Activated CD4-positive, alpha-beta T cell treated with anti-CD3 and anti-CD28 coated beads for 36 hours (primary cell): ENCODE measurements at regions of chr3 and their contacts with region 1.

Region 1: GRCh38 chr3:138915503-138916498 is 31.1 kb downstream of the FOXL2 start:
- DNase-seq: peak; percentile 93
- ATAC-seq: peak; percentile 89
- H3K4me3 Mint-ChIP-seq: peak overlapping the region; percentile 76
- H3K27ac Mint-ChIP-seq: peak overlapping the region; percentile 73
- H3K4me1 Mint-ChIP-seq: peaks cover 5% of the 10 kb centered on the region
- H3K27me3 Mint-ChIP-seq: peaks cover 2% of the 10 kb centered on the region

Region 2: DNA sequence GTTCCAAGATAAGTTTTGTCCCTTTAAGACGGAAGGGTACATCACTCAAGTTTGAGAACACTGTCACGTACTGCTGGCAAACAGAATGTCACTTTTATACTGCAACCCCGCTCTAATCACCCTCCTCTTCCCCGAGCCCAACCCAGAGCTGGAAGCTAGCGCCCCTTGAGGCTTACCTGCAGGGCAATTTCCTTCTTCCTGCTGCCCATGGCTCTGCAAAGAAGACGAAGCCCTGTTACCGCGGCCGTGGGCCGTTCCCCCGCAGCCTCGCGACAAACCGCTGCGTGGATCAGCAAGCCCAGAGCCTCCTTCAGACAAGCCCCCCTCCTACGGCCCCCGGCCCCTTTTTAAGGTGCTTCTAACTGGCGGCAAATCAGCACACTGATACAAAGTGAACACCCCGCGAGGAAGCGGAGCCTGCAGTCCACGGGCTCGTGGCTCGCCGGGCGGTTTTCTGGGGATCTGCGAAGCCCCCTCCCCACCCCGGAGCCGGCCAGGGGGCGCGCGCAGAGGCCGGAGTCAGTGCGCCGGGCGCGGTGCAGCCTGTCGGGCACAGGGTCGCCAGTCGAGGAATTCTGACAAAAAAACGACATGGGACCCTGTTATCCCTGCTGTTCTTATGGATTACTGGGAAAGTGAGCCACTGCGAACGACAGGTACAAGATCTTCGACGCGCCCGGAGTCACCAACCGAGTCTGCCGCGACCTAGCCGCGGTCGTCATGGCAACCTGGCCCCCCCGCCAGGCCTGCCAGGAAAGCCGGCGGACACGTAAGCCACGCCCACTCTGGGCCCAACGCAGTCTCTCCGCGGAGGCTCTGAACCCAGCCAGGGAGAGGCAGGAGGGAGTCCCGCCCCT is 586.4 kb before region 1 on chr3 and contains the start of gene NME9:
- CTCF ChIA-PET with region 1: no interaction called
- POLR2A ChIA-PET with region 1: no interaction called
- intact Hi-C with region 1: loop called in 1 of 2 experiments (anchors 5 kb)
- DNase-seq: peak; percentile 93
- ATAC-seq: peak; percentile 90
- H3K4me3 Mint-ChIP-seq: peak within 1 kb of the TSS; percentile 76
- H3K27ac Mint-ChIP-seq: peak within 1 kb of the TSS; percentile 84
- H3K4me1 Mint-ChIP-seq: peaks cover 30% of the 10 kb centered on the region
- H3K27me3 Mint-ChIP-seq: no peaks in the 10 kb centered on the region
- total RNA-seq, gene NME9: 0.46 to 0.65 TPM

Region 3: DNA sequence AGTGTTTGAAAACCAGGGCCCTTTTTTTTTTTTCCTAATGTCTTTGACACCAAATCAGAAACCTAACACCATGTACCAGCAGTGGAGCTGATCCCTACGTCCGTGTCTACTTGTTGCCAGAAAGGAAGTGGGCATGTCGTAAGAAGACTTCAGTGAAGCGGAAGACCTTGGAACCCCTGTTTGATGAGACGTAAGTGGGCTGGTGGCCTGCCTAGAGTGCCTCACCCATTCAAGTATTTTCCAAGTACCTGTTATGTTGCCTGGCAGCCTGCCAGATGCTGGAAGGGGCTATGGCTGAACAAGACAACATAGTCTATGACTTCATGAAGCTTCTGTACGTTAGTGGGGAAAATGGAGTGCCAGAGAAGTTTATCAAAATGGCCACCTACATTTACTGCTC is 441.6 kb before region 1 on chr3:
- CTCF ChIA-PET with region 1: interaction called, 18 read pairs
- POLR2A ChIA-PET with region 1: no interaction called
- intact Hi-C with region 1: loop called in 1 of 2 experiments (anchors 1 kb)
- DNase-seq: no peak
- ATAC-seq: no peak
- H3K4me3 Mint-ChIP-seq: no peak overlapping the region
- H3K27ac Mint-ChIP-seq: no peak overlapping the region
- H3K4me1 Mint-ChIP-seq: no peaks in the 10 kb centered on the region
- H3K27me3 Mint-ChIP-seq: peaks cover 2% of the 10 kb centered on the region

Region 4: GRCh38 chr3:138694287-138695007 is 221.4 kb before region 1 on chr3:
- CTCF ChIA-PET with region 1: interaction called, 212 read pairs
- POLR2A ChIA-PET with region 1: no interaction called
- intact Hi-C with region 1: loop called (anchors 1 kb)
- DNase-seq: no peak
- ATAC-seq: no peak
- H3K4me3 Mint-ChIP-seq: no peak overlapping the region
- H3K27ac Mint-ChIP-seq: no peak overlapping the region
- H3K4me1 Mint-ChIP-seq: no peaks in the 10 kb centered on the region
- H3K27me3 Mint-ChIP-seq: no peaks in the 10 kb centered on the region

Region 5: GRCh38 chr3:138834359-138835212 is 81.2 kb before region 1 on chr3 and contains the start of gene PIK3CB:
- CTCF ChIA-PET with region 1: interaction called, 3 read pairs
- POLR2A ChIA-PET with region 1: no interaction called
- intact Hi-C with region 1: loop called in 1 of 2 experiments (anchors 1 kb)
- DNase-seq: peak; percentile 93
- ATAC-seq: peak; percentile 91
- H3K4me3 Mint-ChIP-seq: peak within 1 kb of the TSS; percentile 94
- H3K27ac Mint-ChIP-seq: peak within 1 kb of the TSS; percentile 100
- H3K4me1 Mint-ChIP-seq: peaks cover 32% of the 10 kb centered on the region
- H3K27me3 Mint-ChIP-seq: no peaks in the 10 kb centered on the region
- total RNA-seq, gene PIK3CB: 16.2 to 19.1 TPM